Tibial artery (tissue), 4 donors: ENCODE measurements at regions of chr21 and their contacts with region 1.

Region 1: DNA sequence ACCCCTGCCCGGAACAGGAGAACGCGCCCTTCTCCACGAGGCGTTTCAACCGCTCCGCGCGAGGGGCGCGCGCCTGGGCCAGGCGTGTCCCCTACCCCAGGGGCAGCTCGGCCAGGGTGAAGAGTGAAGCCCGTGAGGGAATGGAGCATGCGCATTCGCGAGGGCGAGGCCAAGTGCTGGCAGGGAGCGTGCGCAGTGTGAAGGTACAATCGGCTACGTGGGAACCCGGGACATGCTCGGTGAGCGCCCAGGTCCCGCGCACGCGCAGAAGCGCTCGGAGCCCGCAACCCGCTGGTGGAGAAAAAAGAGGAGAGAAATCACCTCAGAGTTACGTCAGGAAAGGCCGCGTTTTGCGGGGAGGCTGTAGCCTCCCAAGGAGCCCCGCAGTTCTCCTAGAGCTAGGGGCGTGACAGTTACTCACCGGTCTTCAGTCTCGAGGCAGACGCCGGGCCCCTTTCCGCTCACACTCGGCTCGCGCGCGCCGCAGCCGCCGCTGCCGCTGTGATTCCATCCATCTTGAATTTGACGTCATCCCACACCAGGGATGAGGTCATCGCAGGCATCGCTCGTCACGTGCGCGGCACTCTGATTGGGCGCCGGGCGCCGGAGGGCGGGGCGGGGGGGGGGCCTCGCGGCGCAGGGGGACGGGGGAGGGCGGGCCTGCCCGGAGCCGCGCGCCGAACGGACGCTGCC is at the start of gene ZBTB21:
- DNase-seq: peak; percentile 98 to 99
- H3K4me3 ChIP-seq: peak within 1 kb of the TSS; percentile 88 to 89
- H3K27ac ChIP-seq: peak within 1 kb of the TSS; percentile 91 to 99
- H3K4me1 ChIP-seq: peaks cover 0 to 13% (median 6%) of the 10 kb centered on the region in 4 donors
- H3K27me3 ChIP-seq: no peaks in the 10 kb centered on the region
- CTCF ChIP-seq: no peak

Region 2: DNA sequence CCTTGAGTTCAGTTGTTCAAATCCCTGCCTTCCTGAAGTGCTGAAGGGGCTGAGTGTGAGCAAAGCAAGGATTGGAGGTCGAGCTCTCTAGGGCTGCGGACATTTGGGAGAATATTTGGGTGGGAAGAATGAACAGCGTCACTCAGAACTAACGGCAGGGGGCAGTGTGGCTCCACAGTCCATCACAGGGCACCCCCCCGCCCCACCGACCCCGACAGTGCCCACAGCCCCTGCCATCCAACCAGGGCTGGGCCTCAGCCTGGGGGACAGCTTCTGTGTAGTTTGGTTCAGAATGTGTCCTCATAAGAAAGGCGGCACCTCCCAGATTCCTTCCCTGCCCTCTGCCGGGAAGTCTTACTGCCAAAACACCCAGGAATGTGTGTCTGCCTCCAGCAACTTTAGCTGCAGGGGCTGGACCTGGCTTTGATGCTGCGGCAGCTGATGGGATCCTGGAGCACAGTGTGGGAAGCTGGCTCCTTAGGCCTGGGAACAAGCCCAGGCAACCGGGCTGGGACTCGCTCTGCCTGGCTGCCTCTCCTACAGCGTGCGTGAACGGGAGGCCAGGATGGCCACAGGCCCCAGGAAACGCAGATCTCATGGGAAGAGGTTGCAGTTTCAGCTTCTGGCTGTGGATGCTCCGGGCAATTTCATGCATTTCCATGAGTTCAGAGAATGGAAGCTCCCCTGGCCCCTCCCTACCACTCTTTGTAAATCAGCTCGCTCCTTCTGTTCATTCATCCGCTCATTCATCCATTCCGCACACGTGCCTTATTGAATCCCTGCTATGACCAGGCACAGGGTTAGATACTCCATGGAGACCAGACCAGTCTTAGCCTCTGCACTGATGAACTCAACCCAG is 397.1 kb before region 1 on chr21:
- intact Hi-C with region 1: loop called (anchors 10 kb)
- DNase-seq: peak; percentile 90 to 97
- H3K4me3 ChIP-seq: no peak overlapping the region
- H3K27ac ChIP-seq: peak overlapping the region; percentile 92 to 95
- H3K4me1 ChIP-seq: peaks cover 11 to 62% (median 54%) of the 10 kb centered on the region in 4 donors
- H3K27me3 ChIP-seq: no peaks in the 10 kb centered on the region
- CTCF ChIP-seq: peak; percentile 94

Region 3: GRCh38 chr21:41879190-41879998 is 130.6 kb before region 1 on chr21 and contains the start of gene PRDM15:
- intact Hi-C with region 1: loop called (anchors 1 kb)
- DNase-seq: peak; percentile 72 to 89
- H3K4me3 ChIP-seq: peak within 1 kb of the TSS; percentile 75 to 96
- H3K27ac ChIP-seq: peak within 1 kb of the TSS; percentile 82 to 93
- H3K4me1 ChIP-seq: peaks cover 0 to 19% (median 9%) of the 10 kb centered on the region in 4 donors
- H3K27me3 ChIP-seq: no peaks in the 10 kb centered on the region
- CTCF ChIP-seq: no peak

Region 4: GRCh38 chr21:41961282-41961701 is 48.7 kb before region 1 on chr21:
- intact Hi-C with region 1: loop called (anchors 5 kb)
- DNase-seq: no peak
- H3K4me3 ChIP-seq: no peak overlapping the region
- H3K27ac ChIP-seq: no peak overlapping the region
- H3K4me1 ChIP-seq: peaks cover 0 to 32% (median 27%) of the 10 kb centered on the region in 4 donors
- H3K27me3 ChIP-seq: no peaks in the 10 kb centered on the region
- CTCF ChIP-seq: no peak

Region 5: DNA sequence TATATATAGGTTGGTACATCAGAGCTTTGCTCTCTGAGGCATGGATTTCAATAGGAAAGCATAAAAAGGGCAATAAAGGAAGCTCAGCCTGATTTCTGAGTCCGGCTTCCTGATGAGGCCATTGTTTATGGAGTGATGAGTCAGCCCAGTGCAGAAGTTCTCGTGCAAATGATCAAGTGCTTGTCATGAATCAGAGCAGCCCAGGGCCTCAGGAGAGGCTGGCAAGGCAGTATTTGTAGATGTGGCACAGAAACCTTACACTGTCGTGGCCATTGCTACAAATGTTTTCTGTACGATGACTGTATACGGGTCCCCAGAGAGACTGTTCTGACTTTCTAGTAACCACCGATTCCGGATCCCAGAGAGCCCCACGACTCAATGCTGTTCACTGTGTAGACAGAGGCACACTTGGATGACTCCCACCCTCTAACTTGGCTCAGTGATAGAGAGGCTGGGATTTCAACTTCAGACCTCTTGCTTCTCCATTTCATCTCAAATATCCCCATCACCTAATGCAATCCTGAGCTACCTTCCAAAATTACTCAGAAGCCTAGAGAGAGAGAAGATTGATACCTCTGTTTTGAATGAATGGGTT is 88.0 kb after region 1 on chr21:
- intact Hi-C with region 1: loop called (anchors 5 kb)
- DNase-seq: peak; percentile 83 to 85
- H3K4me3 ChIP-seq: no peak overlapping the region
- H3K27ac ChIP-seq: peak overlapping the region; percentile 69 to 74
- H3K4me1 ChIP-seq: peaks cover 0 to 49% (median 27%) of the 10 kb centered on the region in 4 donors
- H3K27me3 ChIP-seq: no peaks in the 10 kb centered on the region
- CTCF ChIP-seq: no peak

Region 6: DNA sequence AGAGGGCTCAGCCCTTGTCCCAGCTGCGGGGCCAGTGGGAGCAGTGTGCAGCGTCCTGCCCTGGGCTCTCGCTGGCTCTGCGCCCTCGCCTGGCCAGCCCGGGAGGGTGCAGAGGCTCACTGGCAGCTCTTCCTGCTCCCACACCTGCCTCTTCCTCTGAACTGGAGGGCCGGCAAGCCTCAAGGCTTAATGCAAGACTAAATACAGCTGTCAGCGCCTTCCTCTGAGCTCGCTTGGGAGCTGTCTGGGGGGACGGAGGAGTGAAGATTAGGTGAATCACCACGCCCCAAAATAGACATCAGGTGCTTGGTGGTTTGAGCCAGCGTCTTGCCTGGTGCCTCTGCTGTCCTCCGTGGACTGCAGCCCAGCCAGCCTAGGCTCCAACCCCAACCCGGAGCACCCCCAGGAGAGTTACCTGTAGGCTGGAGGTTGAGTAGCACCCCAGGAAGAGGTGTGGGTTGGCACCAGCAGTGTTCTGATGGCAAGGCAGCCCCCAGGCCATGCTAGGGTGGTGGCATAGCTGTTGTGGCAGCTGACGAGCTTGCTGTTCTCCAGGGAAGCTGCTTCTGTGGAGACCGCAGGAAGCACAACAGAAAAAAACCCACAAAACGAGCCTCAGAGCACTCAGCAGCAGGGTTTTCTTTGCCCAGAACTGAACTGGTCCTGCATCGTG is 98.0 kb after region 1 on chr21:
- intact Hi-C with region 1: loop called (anchors 5 kb)
- DNase-seq: peak in 1 of 2 donors; percentile 39
- H3K4me3 ChIP-seq: no peak overlapping the region
- H3K27ac ChIP-seq: no peak overlapping the region
- H3K4me1 ChIP-seq: peaks cover 0 to 15% (median 10%) of the 10 kb centered on the region in 4 donors
- H3K27me3 ChIP-seq: peaks cover 0 to 8% of the 10 kb centered on the region in 2 donors
- CTCF ChIP-seq: peak; percentile 75 to 80

Region 7: GRCh38 chr21:42117229-42117966 is 107.4 kb after region 1 on chr21:
- intact Hi-C with region 1: loop called (anchors 5 kb)
- DNase-seq: peak; percentile 72 to 86
- H3K4me3 ChIP-seq: no peak overlapping the region
- H3K27ac ChIP-seq: no peak overlapping the region
- H3K4me1 ChIP-seq: peaks cover 0 to 20% (median 4%) of the 10 kb centered on the region in 4 donors
- H3K27me3 ChIP-seq: peaks cover 0 to 49% of the 10 kb centered on the region in 2 donors
- CTCF ChIP-seq: peak; percentile 93 to 94